Cardiac septum (tissue), 1 donor: ENCODE measurements at regions of chr4 and their contacts with region 1.

Region 1: DNA sequence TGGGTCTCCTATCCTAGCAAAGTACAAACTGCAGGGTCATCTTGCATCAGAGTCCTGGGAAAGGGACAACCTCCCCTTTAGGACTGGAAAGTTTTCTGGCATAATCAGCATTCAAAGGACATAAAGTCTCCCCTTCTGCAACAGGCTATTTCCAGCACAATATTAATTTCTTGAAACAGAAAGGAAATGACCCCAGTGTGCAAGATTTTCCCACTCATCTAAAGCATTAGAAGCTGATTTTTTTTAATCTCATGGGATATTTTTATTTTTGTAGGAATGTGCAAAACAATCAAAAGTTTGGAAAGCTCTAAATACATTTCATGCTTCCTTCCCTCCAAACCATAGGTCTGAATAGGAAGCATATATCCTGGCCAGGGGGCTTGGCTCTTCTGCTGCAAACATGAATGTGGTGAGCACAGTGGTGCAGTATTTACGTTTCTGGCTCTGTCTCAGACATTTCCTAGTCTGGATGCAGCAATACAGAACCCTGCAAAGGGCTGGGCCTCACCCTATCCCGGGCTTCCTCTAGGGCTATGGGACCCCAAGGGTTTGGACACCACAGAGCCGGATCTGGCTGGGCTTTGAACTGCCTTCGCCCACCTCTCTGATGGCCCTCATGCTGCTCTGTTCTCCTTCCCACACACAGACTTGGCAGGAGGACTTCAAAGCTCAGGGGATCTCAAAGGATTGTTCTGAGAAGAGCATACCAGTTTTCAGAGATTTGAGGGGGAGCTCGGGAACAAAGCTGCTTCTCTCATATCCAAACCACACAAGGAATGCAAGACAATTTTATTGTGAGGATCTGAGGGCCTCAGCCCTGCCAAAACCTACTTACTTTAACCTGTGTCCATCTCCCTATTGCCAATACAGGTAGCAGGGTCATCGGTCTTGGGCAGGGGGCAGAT is 64.9 kb downstream of the POLR2B start:
- DNase-seq: no peak

Region 2: GRCh38 chr4:57064811-57065711 is 21.5 kb after region 1 on chr4:
- intact Hi-C with region 1: loop called (anchors 2 kb)
- DNase-seq: peak; percentile 81

Region 3: GRCh38 chr4:57080781-57081650 is 37.4 kb after region 1 on chr4:
- intact Hi-C with region 1: loop called (anchors 5 kb)
- DNase-seq: no peak

Region 4: DNA sequence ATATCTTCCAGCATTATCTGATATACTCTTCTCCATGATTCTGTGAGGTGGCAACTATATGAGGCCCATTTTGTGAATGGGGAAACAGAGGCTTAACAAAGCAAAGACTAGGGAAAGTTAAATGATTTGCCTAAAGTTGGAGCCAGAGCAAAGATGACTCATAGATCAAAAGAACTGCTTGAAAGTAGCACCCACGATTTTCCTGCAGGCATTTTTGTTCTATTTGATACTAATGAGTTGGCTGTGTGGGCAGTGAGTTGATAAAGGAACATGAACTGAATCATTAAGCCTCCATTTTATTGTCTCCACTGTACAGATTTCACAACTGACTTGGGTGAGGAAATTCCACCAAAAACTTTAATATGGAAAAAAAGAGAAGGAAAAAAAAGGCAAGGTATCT is 205.5 kb after region 1 on chr4:
- intact Hi-C with region 1: no loop called
- DNase-seq: no peak